Activated T-helper 2 cell treated with anti-CD3 and anti-CD28 coated beads, Interferon-gamma antibody, Interleukin-2, Interleukin-4, amounts not matched to agents 10 μg/mL and 5 μg/mL and 100 μg/mL, durations not matched to agents 14 hours and 24 hours and 36 hours (primary cell): ENCODE measurements at regions of chr12 and their contacts with region 1.

Region 1: DNA sequence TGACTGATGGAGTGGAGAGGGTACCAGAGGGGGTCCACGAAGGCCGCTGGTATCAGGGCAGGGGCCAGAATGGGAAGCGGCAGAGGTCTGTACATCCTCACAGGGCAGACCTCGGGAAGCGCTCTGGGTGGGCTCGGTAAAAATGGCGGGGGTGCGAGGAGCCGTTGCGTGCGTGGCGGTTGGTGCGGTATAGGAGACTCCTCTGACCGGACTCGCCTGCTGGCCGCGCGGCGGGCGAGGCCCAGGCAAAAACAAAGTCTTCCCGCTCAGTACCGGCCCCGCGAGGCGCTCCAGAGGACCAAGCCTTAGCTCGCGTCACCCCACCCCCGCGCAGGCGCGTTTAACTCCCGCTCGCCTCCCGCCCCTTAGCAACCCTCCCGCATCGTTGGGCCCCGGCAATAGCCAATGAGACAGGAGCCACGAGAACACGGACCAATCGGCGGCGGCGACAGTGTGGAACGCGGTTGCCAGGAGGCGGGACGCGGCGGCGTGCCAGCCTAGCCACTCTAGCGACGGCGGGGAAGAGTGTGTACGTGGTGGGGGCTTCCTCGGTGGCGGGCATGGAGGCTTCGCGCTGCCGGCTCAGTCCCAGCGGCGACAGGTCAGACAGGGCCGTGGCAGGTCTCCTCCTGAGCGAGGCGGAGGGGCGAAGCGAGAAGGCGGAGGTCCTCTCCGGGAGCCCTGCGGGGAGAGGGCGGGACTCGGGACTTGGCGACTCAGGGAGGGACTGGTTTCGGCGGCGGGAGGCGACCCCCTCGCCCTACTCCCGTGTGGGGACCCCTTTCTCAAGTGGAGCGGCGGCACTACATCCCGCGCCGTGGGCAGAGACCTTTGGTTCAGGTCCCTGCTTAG is at the start of gene TULP3:
- DNase-seq: peak; percentile 96
- H3K4me3 Mint-ChIP-seq: peak within 1 kb of the TSS; percentile 93
- H3K27ac Mint-ChIP-seq: peak within 1 kb of the TSS; percentile 93
- H3K4me1 Mint-ChIP-seq: peaks cover 25% of the 10 kb centered on the region
- H3K27me3 Mint-ChIP-seq: no peaks in the 10 kb centered on the region
- total RNA-seq, gene TULP3: 6.0 and 6.4 TPM in 2 replicates

Region 2: DNA sequence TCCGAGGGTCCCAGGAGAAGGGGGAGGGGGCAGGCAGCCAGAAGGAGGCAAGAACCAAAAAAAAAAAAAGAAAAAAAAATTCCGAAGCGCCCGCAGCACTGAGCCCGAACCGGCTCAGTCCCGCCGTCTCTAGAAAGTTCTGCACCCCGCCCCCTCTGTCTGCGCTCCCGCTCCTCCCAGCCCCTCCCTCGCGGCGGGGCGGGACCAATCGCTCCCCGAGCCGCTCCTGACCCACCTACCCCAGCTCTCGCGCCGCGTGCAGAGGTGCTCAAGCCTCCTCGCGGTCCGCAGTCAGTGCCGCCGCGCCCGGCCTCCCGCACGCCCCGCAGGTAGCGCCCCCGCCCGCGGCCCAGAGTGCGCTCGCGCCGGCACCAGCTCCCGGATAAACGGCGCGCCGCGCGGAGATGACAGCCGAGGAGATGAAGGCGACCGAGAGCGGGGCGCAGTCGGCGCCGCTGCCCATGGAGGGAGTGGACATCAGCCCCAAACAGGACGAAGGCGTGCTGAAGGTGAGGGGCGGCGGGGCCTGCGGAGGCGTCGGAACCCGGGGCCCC is 95.8 kb before region 1 on chr12 and contains the start of gene FKBP4:
- intact Hi-C with region 1: loop called (anchors 1 kb)
- DNase-seq: peak; percentile 84
- H3K4me3 Mint-ChIP-seq: peak within 1 kb of the TSS; percentile 85
- H3K27ac Mint-ChIP-seq: peak within 1 kb of the TSS; percentile 22
- H3K4me1 Mint-ChIP-seq: peaks cover 13% of the 10 kb centered on the region
- H3K27me3 Mint-ChIP-seq: peaks cover 17% of the 10 kb centered on the region
- total RNA-seq, gene FKBP4: 219 and 233 TPM in 2 replicates